ENCODE measurements at regions of chr20 and their contacts with region 1.

Region 1: GRCh38 chr20:50399917-50400704 is 110.1 kb upstream of the PTPN1 start:
- DNase-seq: no peak
- H3K4me3 ChIP-seq: no peak overlapping the region
- H3K27ac ChIP-seq: peak overlapping the region; percentile 71 to 87 (median 77)
- H3K4me1 ChIP-seq: peaks cover 0 to 59% (median 52%) of the 10 kb centered on the region in 4 donors
- H3K27me3 ChIP-seq: no peaks in the 10 kb centered on the region
- CTCF ChIP-seq: no peak
- EP300 ChIP-seq: no peak
- POLR2A ChIP-seq: no peak

Region 2: DNA sequence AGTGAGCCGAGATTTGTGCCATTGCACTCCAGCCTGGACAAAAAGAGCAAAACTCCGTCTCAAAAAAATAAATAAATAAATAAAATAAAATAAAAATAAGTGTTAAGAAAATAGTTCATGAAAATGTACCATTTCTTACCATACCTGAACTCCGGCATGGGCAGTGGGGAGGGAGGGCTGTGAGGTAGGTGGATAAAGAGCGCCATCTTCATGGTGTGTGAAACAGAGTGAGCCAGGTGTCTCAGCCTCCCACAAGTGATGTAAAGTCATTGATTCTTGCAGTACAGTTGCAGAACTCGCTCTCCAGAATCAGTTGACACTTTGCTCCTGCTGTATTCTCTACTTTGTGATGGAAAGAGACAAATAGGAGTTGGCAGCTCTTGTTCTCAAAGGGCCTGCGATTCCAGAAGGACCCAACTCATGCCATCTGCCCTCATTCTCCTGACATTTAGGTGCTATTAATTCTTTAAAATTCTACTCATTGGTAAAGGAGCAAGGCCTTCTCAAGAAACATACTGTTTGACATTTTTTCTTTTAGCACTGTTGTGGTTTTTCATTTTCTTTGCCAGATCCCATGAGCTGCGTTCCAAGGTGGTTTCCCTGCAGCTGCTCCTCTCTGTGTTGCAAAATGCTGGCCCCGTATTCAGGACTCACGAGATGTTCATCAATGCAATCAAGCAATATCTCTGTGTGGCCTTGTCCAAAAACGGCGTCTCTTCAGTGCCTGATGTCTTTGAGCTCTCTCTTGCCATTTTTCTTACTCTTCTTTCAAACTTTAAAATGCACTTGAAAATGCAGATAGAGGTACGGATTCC is 1429.4 kb before region 1 on chr20:
- intact Hi-C with region 1: no loop called
- DNase-seq: peak; percentile 70
- H3K4me3 ChIP-seq: no peak overlapping the region
- H3K27ac ChIP-seq: no peak overlapping the region
- H3K4me1 ChIP-seq: peaks cover 0 to 2% (median 1%) of the 10 kb centered on the region in 4 donors
- H3K27me3 ChIP-seq: no peaks in the 10 kb centered on the region
- CTCF ChIP-seq: no peak
- EP300 ChIP-seq: no peak
- POLR2A ChIP-seq: no peak

Region 3: GRCh38 chr20:50415516-50416113 is 15.5 kb after region 1 on chr20:
- intact Hi-C with region 1: loop called (anchors 2 kb)
- DNase-seq: peak; percentile 100
- H3K4me3 ChIP-seq: peak overlapping the region in 1 of 4 donors; percentile 3
- H3K27ac ChIP-seq: peak overlapping the region; percentile 91 to 100 (median 96)
- H3K4me1 ChIP-seq: peaks cover 0 to 35% (median 27%) of the 10 kb centered on the region in 4 donors
- H3K27me3 ChIP-seq: no peaks in the 10 kb centered on the region
- CTCF ChIP-seq: no peak
- EP300 ChIP-seq: peak; percentile 99 to 100 (median 100)
- POLR2A ChIP-seq: peak; percentile 55 to 62

Measured in sigmoid colon (tissue), 7 donors.